Heart left ventricle (tissue), 16 donors: ENCODE measurements at regions of chr11 and their contacts with region 1.

Region 1: DNA sequence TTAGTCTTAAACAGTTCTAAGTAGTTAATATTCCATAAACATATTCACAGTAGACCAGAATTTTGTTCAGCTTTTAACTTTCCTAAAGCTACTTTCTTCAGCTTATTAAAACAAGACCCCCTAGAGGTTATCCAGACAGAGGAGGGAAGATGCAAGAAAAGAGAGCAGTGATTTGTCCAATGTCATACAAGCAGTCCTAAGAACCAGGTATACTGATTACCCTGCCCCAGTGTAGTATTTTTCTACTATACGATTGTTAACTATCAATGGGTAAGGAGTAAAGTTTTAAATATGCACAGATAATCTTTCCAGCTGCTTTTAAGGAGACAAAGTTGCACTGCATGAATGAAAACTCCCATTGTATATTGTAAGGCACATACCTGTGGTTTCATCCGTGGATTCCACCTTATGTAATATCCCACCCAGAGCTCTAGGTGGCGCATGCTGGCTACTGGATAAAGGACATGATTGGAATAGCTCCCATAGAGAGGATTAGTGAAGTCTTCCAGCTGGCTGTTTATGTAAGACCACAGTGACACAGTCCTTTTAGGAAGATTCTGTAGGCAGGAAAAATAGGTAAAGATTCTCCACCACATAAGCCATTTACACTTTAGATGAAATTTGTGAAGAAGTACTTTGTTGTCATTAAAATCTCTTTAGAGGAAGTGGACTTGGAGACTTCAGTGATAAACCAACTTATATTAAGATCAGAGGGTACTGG is 45.6 kb downstream of the CEP57 start:
- DNase-seq: peak; percentile 36 to 60 (median 48)
- ATAC-seq: peak; percentile 83 to 97 (median 95)
- H3K4me3 ChIP-seq: no peak overlapping the region
- H3K27ac ChIP-seq: peak overlapping the region in 3 of 12 donors; percentile 27 to 59 (median 29)
- H3K4me1 ChIP-seq: peaks cover 0 to 11% (median 0%) of the 10 kb centered on the region in 12 donors
- H3K27me3 ChIP-seq: no peaks in the 10 kb centered on the region
- CTCF ChIP-seq: peak; percentile 76 to 93 (median 87)
- POLR2A ChIP-seq: no peak

Region 2: DNA sequence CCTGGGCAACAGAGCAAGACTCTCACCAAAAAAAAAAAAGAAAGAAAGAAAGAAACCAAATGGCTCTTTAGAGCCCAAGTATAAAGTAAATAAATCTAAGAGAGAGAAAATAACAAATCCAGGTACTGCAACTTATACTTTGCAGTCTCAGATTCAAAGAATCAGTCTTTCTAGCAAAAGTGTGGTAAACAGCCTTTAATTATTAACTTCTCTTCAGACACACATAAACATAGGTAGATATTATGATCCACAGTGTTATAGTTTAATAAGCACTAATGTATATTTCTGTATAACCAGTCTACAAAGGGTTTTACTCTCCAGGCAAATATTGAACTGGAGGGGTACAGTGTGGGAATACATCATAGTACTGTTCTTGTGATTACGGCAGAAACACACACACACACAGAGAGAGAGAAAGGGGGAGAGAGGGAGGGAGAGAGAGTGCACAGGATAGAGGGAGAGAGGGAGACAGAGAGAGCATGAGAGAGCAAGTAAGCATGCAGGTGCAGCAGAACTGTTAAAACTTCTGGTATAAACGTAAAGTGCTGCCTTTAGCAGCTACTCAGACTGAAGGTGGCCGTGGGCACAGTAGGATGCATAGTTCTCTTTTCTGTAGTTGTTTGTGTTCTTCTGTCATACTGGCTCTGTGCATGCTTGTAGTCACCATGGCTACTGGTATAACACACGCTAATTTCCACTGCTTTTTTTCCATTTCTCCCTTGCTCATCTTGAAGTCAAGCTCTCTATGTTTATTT is 55.7 kb after region 1 on chr11:
- intact Hi-C with region 1: no loop called
- DNase-seq: no peak
- ATAC-seq: peak in 3 of 4 donors; percentile 22 to 55 (median 33)
- H3K4me3 ChIP-seq: no peak overlapping the region
- H3K27ac ChIP-seq: no peak overlapping the region
- H3K4me1 ChIP-seq: peaks cover 0 to 46% (median 5%) of the 10 kb centered on the region in 12 donors
- H3K27me3 ChIP-seq: no peaks in the 10 kb centered on the region
- CTCF ChIP-seq: no peak
- POLR2A ChIP-seq: no peak

Region 3: GRCh38 chr11:95923728-95924413 is 87.9 kb after region 1 on chr11 and contains the start of gene MTMR2:
- intact Hi-C with region 1: loop called in 2 of 10 experiments (anchors 10 kb)
- DNase-seq: peak; percentile 83 to 90 (median 85)
- ATAC-seq: peak; percentile 98 to 100 (median 100)
- H3K4me3 ChIP-seq: peak within 1 kb of the TSS; percentile 68 to 93 (median 86)
- H3K27ac ChIP-seq: peak within 1 kb of the TSS; percentile 87 to 98 (median 95)
- H3K4me1 ChIP-seq: peaks cover 0 to 40% (median 23%) of the 10 kb centered on the region in 12 donors
- H3K27me3 ChIP-seq: no peaks in the 10 kb centered on the region
- CTCF ChIP-seq: peak in 1 of 12 donors; percentile 12
- POLR2A ChIP-seq: peak in 1 of 2 donors; percentile 67
- total RNA-seq, gene MTMR2: 13.1 to 23.9 (median 18.8) TPM

Region 4: DNA sequence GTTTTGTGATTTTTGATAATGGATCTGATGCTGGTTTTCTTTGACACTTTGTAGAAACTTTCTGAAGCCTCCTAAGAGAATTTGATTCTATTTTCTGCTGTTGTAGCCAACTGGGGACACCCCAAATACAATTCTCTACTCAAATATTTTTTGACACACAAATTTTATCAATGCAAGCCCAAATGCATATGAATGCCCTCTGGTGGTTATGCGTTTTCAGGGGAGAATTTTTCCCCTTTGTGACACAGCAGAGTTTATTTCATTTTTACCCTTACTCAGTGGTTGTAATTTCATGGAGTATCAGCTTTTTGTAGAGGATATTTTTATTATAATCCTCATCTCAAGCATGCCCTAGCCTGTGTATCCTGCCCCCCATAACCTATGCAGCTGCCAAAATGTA is 132.7 kb after region 1 on chr11:
- intact Hi-C with region 1: loop called in 1 of 10 experiments (anchors 10 kb)
- DNase-seq: no peak
- ATAC-seq: no peak
- H3K4me3 ChIP-seq: no peak overlapping the region
- H3K27ac ChIP-seq: no peak overlapping the region
- H3K4me1 ChIP-seq: no peaks in the 10 kb centered on the region
- H3K27me3 ChIP-seq: no peaks in the 10 kb centered on the region
- CTCF ChIP-seq: peak in 3 of 12 donors; percentile 8 to 28 (median 22)
- POLR2A ChIP-seq: no peak

Region 5: DNA sequence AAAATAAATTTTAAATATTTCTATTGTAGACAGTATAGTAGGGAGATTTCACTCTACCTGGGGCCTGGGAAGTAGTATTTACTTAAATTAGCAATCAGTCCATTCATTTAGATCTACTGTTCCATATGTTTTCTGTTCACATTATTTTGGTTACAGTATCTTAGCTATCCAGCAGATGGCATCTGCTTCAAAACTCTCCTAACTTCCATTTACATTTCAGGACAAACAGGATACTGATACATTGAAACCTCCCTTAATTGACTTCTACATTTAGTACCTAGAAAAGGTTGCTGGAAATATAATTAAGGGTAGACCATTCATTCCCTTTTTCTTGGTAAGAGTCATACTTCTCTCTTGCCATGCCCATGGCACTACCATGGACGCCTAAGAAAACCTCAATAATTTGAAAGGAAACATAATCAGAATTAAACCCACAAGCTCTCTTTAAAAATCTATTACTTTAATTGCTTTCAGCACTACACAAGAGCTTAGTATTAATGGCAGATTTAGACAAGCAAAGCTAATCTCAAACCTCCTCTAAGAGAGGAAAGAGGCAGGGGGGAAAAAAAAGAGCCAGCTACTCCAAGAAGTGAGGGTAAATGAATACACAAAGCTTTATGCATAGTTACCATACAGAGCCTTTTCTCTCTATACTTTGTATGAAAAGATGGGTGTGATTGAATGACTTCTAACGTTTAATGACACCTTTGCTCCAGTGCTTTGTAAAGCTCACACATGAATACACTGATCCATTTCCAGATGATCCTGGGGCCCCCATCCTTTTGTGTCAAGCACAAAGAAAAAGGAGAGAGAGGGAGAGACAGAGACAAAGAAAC is 219.2 kb after region 1 on chr11:
- intact Hi-C with region 1: loop called in 2 of 10 experiments (anchors 10 kb)
- DNase-seq: no peak
- ATAC-seq: peak in 2 of 4 donors; percentile 63 to 79
- H3K4me3 ChIP-seq: no peak overlapping the region
- H3K27ac ChIP-seq: peak overlapping the region in 1 of 12 donors; percentile 11
- H3K4me1 ChIP-seq: peaks cover 0 to 62% (median 5%) of the 10 kb centered on the region in 12 donors
- H3K27me3 ChIP-seq: no peaks in the 10 kb centered on the region
- CTCF ChIP-seq: peak; percentile 43 to 79 (median 66)
- POLR2A ChIP-seq: no peak

Region 6: DNA sequence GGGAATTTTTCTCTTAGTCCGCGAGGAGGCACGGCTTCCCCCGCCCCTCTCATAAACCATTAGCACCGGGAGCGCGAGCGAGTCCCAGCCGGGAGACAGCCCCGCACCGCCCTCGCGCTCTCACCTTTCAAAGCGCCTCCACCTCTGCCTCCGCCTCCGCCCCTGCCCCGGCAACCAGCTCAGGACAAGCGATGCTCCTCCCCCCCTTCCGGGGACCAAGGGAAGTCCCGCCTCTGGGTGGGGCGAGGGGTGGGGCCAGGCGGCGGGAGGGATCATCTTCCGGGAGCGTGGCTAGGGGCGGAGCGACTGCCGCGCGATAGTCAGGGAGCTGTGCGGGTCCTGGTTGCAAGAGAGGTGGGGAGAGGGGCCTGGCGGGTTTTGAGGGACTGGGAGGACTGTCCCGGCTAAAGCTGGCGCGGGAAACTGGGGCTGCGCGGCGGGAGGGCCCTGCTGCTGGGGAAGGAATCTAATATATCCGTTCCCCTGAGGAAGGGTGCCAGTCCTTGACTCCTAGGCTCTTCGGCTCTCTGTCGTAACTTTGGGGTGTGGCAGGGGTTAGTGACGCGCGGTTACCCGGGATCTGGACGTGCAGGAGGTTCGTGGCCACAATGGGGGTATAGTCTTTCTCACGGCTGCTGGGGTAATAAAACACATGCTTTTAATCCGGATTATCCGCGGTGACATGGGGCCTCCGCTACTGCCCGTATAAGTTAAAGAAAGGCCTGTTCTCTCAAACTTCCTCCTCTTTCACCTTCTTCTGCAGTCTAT is 554.0 kb after region 1 on chr11 and contains the starts of genes CCDC82 and JRKL:
- intact Hi-C with region 1: loop called in 8 of 10 experiments (anchors 2 to 10 kb)
- DNase-seq: peak; percentile 96 to 98 (median 97)
- ATAC-seq: peak; percentile 99 to 100 (median 100)
- H3K4me3 ChIP-seq: peak within 1 kb of the TSS; percentile 71 to 94 (median 84)
- H3K27ac ChIP-seq: peak within 1 kb of the TSS; percentile 54 to 92 (median 87)
- H3K4me1 ChIP-seq: peaks cover 0 to 32% (median 20%) of the 10 kb centered on the region in 12 donors
- H3K27me3 ChIP-seq: no peaks in the 10 kb centered on the region
- CTCF ChIP-seq: peak in 1 of 12 donors; percentile 3
- POLR2A ChIP-seq: peak; percentile 5 to 83
- total RNA-seq, gene CCDC82: 5.4 to 16.4 (median 14.5) TPM
- total RNA-seq, gene JRKL: 2.6 to 8.3 (median 5.5) TPM

Region 7: DNA sequence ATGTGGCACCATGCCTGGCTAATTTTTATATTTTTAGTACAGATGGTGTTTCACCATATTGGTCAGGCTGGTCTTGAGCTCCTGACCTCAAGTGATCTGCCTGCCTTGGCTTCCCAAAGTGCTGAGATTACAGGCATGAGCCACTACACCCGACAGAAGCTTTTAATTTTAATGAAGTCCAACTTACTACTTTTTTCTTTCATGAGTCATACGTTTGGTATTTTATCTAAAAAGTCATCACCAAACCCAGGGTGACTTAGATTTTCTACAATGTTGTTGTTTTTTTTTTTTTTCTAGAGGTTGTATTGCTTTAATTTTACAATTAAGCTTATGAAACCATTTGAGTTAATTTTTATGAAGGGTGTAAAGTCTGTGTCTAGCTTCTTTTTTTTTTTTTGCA is 588.8 kb after region 1 on chr11:
- intact Hi-C with region 1: loop called in 4 of 10 experiments (anchors 5 to 10 kb)
- DNase-seq: no peak
- ATAC-seq: no peak
- H3K4me3 ChIP-seq: no peak overlapping the region
- H3K27ac ChIP-seq: no peak overlapping the region
- H3K4me1 ChIP-seq: no peaks in the 10 kb centered on the region
- H3K27me3 ChIP-seq: peaks cover 0 to 21% (median 0%) of the 10 kb centered on the region in 9 donors
- CTCF ChIP-seq: no peak
- POLR2A ChIP-seq: no peak